ENCODE measurements at regions of chr11 and their contacts with region 1.

Region 1: DNA sequence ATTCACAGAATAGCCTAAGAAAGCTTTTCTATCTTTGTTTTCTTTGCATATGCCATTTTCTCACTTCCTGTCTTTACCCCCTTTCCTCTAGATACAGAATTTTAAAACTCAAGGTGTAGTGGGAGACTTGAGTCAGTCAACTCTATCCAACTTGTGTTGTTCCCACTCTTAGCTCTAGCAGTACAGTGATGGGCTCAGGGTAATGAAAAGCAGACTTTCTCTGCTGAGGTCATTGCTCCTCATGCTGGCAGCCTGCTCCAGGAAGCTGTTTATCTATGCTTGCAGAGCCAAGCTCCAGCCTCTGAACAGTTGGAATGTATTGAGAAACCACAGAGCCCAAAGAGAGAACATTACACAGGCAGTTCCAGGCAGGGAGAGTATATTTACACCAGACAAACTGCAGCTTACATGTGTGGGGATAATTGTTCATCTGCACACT is 68.1 kb downstream of the CSTPP1 start:
- DNase-seq: peak; percentile 98
- H3K4me3 ChIP-seq: no peak overlapping the region
- H3K27ac ChIP-seq: peak overlapping the region; percentile 70
- H3K4me1 ChIP-seq: peaks cover 68% of the 10 kb centered on the region
- H3K27me3 ChIP-seq: no peaks in the 10 kb centered on the region
- CTCF ChIP-seq: peak; percentile 10; the same call in 1 of the 2 replicates

Region 2: DNA sequence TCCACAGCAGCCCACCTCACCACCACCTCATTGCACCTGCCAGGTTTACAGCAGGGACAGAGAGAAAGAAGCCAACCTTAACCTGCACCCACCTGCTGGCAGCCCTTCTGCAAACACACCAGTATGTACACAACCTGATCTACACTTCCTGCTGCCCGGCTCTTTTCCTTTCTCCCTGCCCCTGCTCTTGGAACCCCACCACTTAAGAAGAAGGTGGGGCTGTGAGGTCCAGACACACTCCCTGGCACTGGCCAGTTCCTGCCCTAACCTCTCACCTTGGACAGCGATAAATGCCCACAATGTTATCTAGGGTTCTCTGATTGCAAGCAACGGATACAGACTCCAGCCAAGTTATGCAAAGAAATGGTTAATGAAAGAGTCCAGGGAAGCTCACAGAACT is 1210.4 kb before region 1 on chr11:
- CTCF ChIA-PET with region 1: no interaction called
- POLR2A ChIA-PET with region 1: no interaction called
- intact Hi-C with region 1: no loop called
- DNase-seq: no peak
- H3K4me3 ChIP-seq: no peak overlapping the region
- H3K27ac ChIP-seq: no peak overlapping the region
- H3K4me1 ChIP-seq: no peaks in the 10 kb centered on the region
- H3K27me3 ChIP-seq: no peaks in the 10 kb centered on the region
- CTCF ChIP-seq: no peak

Region 3: DNA sequence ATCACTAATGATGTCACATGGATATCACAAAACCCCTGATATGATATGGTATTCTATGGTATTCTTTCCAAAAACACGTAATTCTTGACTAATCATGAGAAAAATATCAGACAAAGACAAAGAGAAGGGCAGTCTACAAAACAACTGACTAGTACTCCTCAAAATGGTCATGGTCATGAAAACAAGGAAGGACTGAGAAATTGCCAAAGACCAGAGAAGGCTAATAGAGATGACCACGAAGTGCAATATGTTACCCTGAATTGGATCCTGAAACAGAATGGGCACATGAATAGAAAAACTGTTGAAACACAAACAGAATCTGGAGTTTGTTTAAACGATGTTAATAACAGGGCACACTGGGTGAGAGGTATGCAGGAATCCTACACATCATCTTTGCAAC is 168.7 kb before region 1 on chr11:
- CTCF ChIA-PET with region 1: no interaction called
- POLR2A ChIA-PET with region 1: interaction called, 13 read pairs
- intact Hi-C with region 1: no loop called
- DNase-seq: no peak
- H3K4me3 ChIP-seq: no peak overlapping the region
- H3K27ac ChIP-seq: no peak overlapping the region
- H3K4me1 ChIP-seq: peaks cover 10% of the 10 kb centered on the region
- H3K27me3 ChIP-seq: no peaks in the 10 kb centered on the region
- CTCF ChIP-seq: no peak

Region 4: DNA sequence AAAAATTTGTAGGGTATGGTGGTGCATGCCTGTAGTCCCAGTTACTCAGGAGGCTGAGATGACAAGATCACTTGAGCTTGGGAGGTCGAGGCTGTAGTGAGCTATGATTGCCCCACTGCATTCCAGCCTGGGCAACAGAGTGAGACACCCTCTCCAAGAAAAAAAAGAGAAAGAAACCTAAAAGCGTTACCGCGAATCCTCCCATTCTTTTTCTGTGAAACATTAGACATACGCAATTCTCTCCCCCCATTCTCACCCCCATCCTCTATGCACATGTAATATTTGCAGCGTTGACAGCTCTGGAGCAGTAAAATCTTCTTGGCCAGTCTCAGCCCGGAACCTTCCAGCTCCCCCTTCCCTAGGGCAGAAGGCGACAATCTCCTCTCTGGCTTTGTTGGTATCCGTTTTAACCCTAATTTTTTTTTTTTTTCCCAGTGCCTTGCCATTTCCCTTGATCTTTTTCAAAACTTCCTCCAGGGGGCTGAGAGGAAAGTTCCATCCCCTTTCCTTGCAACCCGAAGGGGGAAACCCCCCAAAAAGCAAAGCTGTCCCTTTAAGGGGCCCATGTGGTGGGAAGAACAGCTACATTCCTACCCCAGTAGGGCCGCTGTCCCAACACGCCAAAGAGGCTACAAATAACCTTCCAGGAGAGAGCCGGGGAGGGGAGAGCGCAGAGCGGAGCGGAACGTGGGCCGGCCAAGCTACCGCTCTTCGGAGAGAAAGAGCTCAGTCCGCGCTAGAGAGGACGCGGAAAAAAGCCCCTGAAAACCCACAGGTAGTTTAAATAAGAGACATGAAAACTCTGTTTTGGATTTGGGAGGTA is 88.1 kb before region 1 on chr11:
- CTCF ChIA-PET with region 1: interaction called, 10 read pairs
- POLR2A ChIA-PET with region 1: interaction called, 18 read pairs
- intact Hi-C with region 1: no loop called
- DNase-seq: peak; percentile 96
- H3K4me3 ChIP-seq: peak overlapping the region; percentile 71
- H3K27ac ChIP-seq: peak overlapping the region; percentile 60
- H3K4me1 ChIP-seq: peaks cover 47% of the 10 kb centered on the region
- H3K27me3 ChIP-seq: no peaks in the 10 kb centered on the region
- CTCF ChIP-seq: peak; percentile 69

Region 5: GRCh38 chr11:47143322-47143721 is 138.7 kb after region 1 on chr11:
- CTCF ChIA-PET with region 1: interaction called, 17 read pairs
- POLR2A ChIA-PET with region 1: no interaction called
- intact Hi-C with region 1: no loop called
- DNase-seq: no peak
- H3K4me3 ChIP-seq: no peak overlapping the region
- H3K27ac ChIP-seq: no peak overlapping the region
- H3K4me1 ChIP-seq: no peaks in the 10 kb centered on the region
- H3K27me3 ChIP-seq: no peaks in the 10 kb centered on the region
- CTCF ChIP-seq: no peak

Region 6: DNA sequence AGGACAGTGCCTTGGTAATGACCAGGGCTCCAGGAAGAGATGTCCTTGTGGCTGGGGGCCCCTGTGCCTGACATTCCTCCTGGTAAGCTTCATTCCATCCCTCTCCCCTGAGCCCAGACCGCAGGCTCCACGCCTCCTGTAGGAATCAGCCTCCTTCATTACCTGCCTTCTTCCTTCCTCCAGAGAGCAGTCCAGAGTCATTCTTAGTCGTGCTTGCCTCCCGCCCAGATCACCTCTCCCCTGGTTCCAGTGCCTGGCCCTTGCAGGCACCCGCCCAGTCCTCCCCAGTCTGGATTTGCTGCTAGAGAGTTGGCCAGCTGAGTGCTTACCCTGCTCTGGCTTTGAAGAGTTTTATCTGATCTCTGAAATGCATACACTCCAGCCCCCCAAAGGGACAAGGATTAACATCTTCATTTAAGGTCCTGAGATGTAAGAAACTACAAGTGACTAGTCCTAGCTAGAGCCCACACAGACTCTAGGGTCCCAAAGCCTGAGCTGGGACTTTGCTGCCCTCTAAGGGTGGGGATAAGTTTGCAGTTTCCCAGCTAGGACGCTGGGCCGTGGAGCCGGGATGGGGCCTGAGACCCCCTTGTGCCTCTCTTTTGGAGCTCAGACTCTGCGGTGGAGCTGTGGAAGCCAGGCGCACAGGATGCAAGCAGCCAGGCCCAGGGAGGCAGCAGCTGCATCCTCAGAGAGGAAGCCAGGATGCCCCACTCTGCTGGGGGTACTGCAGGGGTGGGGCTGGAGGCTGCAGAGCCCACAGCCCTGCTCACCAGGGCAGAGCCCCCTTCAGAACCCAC is 254.8 kb after region 1 on chr11:
- CTCF ChIA-PET with region 1: no interaction called
- POLR2A ChIA-PET with region 1: no interaction called
- intact Hi-C with region 1: no loop called
- DNase-seq: peak; percentile 79
- H3K4me3 ChIP-seq: no peak overlapping the region
- H3K27ac ChIP-seq: no peak overlapping the region
- H3K4me1 ChIP-seq: peaks cover 23% of the 10 kb centered on the region
- H3K27me3 ChIP-seq: no peaks in the 10 kb centered on the region
- CTCF ChIP-seq: peak; percentile 87